B cell (primary cell): ENCODE measurements at regions of chr10 and their contacts with region 1.

Region 1: DNA sequence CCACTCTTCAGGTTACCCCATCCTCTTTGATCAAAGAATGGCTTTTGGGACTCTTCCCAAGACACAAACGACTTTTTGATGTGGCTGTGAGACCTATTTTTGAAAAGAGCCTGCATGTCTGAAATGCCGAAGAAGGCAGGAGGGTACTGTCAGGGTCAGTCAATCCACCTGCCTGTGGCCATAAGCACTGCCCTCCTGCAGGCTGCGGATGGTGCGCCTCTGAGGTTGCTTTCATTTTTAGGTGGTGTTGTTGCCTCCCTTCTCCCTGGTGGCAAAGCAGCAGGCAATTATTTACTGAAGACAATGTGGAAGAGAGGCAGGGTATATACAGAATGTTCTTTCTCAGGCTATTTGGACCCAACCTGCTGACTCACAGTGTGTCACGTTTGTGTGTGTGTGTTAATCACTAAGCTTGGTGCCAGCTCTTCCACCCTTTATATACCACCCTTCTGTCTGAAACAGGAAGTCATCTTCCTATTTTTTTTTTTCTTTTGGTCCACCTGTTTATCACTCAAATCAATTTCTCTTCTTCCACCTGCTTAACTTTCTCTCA is 1421.2 kb upstream of the CELF2 start:
- DNase-seq: no peak
- ATAC-seq: no peak
- H3K4me3 ChIP-seq: no peak overlapping the region
- H3K4me3 Mint-ChIP-seq: no peak overlapping the region
- H3K27ac ChIP-seq: no peak overlapping the region
- H3K27ac Mint-ChIP-seq: no peak overlapping the region
- H3K4me1 ChIP-seq: no peaks in the 10 kb centered on the region
- H3K4me1 Mint-ChIP-seq: no peaks in the 10 kb centered on the region
- H3K27me3 ChIP-seq: no peaks in the 10 kb centered on the region
- H3K27me3 Mint-ChIP-seq: no peaks in the 10 kb centered on the region
- CTCF ChIP-seq: no peak

Region 2: GRCh38 chr10:9579110-9579705 is 17.2 kb before region 1 on chr10:
- CTCF ChIA-PET with region 1: no interaction called
- POLR2A ChIA-PET with region 1: no interaction called
- intact Hi-C with region 1: no loop called
- DNase-seq: no peak
- ATAC-seq: no peak
- H3K4me3 ChIP-seq: no peak overlapping the region
- H3K4me3 Mint-ChIP-seq: no peak overlapping the region
- H3K27ac ChIP-seq: no peak overlapping the region
- H3K27ac Mint-ChIP-seq: no peak overlapping the region
- H3K4me1 ChIP-seq: no peaks in the 10 kb centered on the region
- H3K4me1 Mint-ChIP-seq: no peaks in the 10 kb centered on the region
- H3K27me3 ChIP-seq: no peaks in the 10 kb centered on the region
- H3K27me3 Mint-ChIP-seq: no peaks in the 10 kb centered on the region
- CTCF ChIP-seq: no peak

Region 3: DNA sequence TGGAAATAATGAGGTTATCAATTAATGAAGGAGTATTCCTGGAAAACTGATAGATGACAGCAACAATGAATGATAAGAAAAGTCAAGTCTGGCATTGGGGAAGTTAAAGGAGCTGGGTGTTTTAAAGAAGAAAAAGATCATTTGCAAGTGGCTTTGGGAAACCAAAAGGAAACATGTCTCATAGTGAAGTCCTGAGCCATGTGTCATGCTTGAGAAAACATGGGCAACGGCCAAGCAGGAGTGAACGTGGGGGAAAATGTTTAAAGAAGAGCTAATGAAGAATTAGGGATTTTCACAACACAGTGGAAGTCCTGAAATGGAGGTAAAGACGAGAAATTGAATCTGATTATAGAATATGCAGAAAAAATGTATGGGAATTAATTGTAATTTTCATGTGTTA is 38.0 kb after region 1 on chr10:
- CTCF ChIA-PET with region 1: no interaction called
- POLR2A ChIA-PET with region 1: no interaction called
- intact Hi-C with region 1: loop called (anchors 1 kb)
- DNase-seq: no peak
- ATAC-seq: no peak
- H3K4me3 ChIP-seq: no peak overlapping the region
- H3K4me3 Mint-ChIP-seq: no peak overlapping the region
- H3K27ac ChIP-seq: no peak overlapping the region
- H3K27ac Mint-ChIP-seq: no peak overlapping the region
- H3K4me1 ChIP-seq: no peaks in the 10 kb centered on the region
- H3K4me1 Mint-ChIP-seq: no peaks in the 10 kb centered on the region
- H3K27me3 ChIP-seq: no peaks in the 10 kb centered on the region
- H3K27me3 Mint-ChIP-seq: no peaks in the 10 kb centered on the region
- CTCF ChIP-seq: no peak

Region 4: GRCh38 chr10:9645928-9646600 is 49.6 kb after region 1 on chr10:
- CTCF ChIA-PET with region 1: no interaction called
- POLR2A ChIA-PET with region 1: no interaction called
- intact Hi-C with region 1: no loop called
- DNase-seq: no peak
- ATAC-seq: no peak
- H3K4me3 ChIP-seq: no peak overlapping the region
- H3K4me3 Mint-ChIP-seq: no peak overlapping the region
- H3K27ac ChIP-seq: no peak overlapping the region
- H3K27ac Mint-ChIP-seq: no peak overlapping the region
- H3K4me1 ChIP-seq: no peaks in the 10 kb centered on the region
- H3K4me1 Mint-ChIP-seq: no peaks in the 10 kb centered on the region
- H3K27me3 ChIP-seq: no peaks in the 10 kb centered on the region
- H3K27me3 Mint-ChIP-seq: no peaks in the 10 kb centered on the region
- CTCF ChIP-seq: no peak